Motor neuron (in vitro differentiated cells): ENCODE measurements at regions of chr9 and their contacts with region 1.

Region 1: DNA sequence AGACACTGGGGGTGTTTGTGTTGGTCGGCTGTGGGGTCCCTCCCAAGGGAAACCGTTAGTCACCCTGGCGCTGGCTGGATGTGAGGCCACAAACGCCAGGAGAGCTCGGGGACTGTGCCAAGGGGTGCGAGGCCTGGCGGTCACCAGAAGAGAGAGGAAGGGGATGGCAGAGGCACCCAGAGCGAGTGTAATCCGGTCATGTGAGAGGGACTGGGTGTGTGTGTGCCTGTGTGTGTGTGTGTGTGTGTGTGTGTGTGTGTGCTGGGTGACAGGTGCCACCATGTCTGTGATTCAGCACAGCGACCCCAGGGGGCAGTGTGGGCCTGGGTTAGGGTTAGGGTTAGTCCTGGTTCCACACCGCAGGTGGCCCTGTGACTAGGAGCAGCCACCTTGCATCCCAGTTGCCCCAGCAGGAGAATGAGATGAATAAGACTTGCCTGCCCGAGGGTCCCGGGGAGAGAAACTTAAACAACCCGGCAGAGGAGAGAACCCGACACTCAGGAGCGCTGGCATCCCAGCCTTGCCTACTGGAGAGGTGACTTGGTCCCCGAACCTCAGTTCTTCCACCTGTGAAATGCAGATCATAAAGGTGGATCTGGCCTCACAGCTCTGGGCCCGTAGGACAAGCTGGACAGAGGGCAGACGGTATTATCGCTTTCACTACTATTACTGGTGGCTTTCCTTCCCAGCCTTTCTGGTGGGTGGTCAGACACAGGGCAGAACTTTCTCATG is 1.4 kb upstream of the ADAMTSL2 start:
- ATAC-seq: peak; percentile 15 to 62 (median 30)
- H3K4me3 ChIP-seq: no peak overlapping the region
- H3K27ac ChIP-seq: no peak overlapping the region
- H3K4me1 ChIP-seq: peaks cover 21 to 33% of the 10 kb centered on the region in 2 donors

Region 2: DNA sequence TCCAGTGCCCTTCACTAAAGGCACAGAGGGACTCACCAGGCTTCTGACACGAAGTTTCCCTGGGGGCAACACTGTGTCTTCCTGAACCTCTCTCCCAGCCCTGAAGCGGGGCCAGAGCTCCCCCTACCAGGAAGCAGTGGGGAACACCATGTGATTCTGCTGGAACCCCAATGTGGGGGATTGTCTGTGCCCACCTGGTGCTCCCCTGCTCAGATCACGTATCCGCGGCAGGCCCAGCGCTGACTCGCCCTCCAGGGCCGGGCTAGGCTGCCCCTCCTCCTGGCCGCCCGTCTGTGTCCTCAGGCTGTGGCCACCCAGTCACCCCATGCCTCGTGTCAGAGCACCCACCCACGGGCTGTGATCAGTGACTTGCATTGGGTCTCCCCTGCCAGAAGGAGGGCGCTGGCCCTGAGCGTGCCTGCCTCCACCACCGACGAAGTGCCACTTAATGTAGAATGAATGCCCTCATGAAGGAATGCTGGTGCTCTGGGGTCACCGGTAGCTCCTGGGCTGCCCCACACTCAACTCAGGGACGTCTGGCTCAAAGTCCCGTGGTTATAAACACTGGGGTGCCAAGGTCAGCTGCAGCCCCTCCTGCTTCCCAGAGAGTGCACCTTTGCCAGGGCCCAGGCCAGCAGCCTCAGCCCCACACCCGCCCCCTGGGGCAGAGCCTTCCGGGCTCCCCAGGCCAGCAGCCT is 182.9 kb after region 1 on chr9:
- in situ Hi-C with region 1: loop called in 2 of 9 experiments (anchors 10 to 25 kb)
- ATAC-seq: peak in 7 of 8 experiments; percentile 18 to 67 (median 54)
- H3K4me3 ChIP-seq: no peak overlapping the region
- H3K27ac ChIP-seq: no peak overlapping the region
- H3K4me1 ChIP-seq: peaks cover 3 to 6% of the 10 kb centered on the region in 2 donors

Region 3: GRCh38 chr9:133726401-133727276 is 193.5 kb after region 1 on chr9:
- in situ Hi-C with region 1: loop called in 3 of 9 experiments (anchors 10 to 25 kb)
- ATAC-seq: peak; percentile 69 to 88 (median 78)
- H3K4me3 ChIP-seq: no peak overlapping the region
- H3K27ac ChIP-seq: no peak overlapping the region
- H3K4me1 ChIP-seq: no peaks in the 10 kb centered on the region

Region 4: DNA sequence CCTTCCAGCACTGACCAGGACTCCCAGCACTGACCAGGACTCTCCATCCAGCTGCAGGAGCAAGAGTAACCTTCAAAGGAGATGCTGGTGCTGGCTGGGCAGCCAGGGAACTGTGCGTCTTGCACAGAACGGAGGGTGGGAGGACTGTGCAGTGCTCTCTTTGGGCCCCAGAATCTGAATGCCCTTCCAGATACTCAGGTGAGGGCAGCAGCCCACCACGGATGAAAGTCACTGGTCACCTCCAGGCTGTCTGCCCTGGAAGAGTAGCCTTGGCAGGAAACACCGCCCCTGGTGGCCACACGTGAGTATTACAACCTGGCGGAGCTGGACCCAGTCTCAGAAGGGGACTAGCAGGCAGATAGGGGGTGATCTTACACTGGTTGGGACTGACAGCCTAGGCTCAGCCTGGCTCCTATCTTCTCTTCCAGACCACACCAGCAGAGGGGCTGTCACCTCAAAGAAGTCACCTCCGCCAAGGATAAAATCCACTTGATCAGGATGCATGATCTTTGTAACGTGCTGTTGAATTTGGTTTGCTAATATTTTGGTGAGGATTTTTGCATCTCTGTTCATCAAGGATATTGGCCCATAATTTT is 209.8 kb after region 1 on chr9:
- in situ Hi-C with region 1: loop called in 1 of 9 experiments (anchors 25 kb)
- ATAC-seq: peak; percentile 69 to 90 (median 78)
- H3K4me3 ChIP-seq: no peak overlapping the region
- H3K27ac ChIP-seq: no peak overlapping the region
- H3K4me1 ChIP-seq: peaks cover 8 to 11% of the 10 kb centered on the region in 2 donors

Region 5: DNA sequence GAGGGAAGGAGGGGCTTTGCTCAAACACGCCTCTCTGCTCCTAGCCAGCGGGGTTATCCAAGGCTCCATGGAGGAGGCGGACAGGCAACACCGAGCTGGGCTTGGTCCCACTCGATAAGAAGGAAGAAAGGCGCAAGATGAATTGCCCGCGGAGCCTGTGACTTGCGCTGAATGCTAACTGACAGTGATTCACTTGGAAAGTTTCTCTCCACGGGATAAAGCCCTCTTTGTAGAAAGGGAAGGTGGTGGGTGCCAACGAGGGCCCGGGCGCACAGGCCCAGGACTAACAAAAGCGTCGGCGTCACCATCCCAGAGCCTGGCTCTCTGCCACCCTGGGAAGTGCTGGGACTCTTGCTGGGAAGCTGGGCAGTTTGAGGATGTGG is 383.0 kb after region 1 on chr9:
- in situ Hi-C with region 1: no loop called
- ATAC-seq: peak in 4 of 8 experiments; percentile 5 to 55 (median 36)
- H3K4me3 ChIP-seq: no peak overlapping the region
- H3K27ac ChIP-seq: peak overlapping the region in 1 of 2 donors; percentile 42
- H3K4me1 ChIP-seq: peaks cover 67 to 95% of the 10 kb centered on the region in 2 donors